Mammary epithelial cell (primary cell): ENCODE measurements at regions of chr9 and their contacts with region 1.

Region 1: DNA sequence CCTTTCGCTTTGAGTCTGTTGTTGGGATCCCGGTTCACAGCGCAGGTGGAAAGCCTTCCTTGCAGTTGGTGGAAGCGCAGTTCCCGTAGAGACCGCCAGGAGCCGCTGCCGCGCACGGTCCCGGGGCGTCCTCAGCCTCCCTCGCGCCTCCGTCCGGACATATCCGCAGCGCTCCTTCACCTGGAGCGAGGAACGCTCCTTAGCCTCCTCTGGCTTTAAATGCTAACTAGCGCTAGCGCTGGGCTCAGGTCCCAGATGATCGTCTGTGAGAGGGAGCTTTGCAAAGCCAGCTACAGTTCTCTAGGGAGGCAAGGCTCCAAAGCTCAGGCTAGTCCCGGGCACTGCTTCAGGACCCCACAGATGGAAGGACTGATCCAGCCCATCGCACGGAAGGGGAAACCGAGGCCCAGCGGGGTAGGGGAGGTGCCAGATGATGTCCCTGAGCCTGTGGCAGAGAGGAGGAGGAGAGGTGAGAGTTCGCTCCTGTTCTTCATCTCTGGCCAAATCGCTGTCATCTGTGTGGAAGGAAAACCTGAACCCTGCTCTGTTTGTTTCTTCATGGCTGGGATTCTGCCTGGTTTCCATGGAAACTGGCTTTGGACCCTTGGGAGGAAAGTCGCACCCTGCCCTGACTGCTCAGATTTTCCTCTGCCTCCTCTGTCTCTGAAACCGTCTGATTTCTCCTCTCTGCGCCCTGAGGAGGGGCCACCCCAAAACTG is 31.4 kb downstream of the COL15A1 start:
- DNase-seq: peak; percentile 66
- H3K4me3 ChIP-seq: peak overlapping the region in 1 of 3 experiments; percentile 10
- H3K27ac ChIP-seq: no peak overlapping the region
- H3K4me1 ChIP-seq: peaks cover 10% of the 10 kb centered on the region
- H3K27me3 ChIP-seq: no peaks in the 10 kb centered on the region
- CTCF ChIP-seq: peak; percentile 96 to 99

Region 2: DNA sequence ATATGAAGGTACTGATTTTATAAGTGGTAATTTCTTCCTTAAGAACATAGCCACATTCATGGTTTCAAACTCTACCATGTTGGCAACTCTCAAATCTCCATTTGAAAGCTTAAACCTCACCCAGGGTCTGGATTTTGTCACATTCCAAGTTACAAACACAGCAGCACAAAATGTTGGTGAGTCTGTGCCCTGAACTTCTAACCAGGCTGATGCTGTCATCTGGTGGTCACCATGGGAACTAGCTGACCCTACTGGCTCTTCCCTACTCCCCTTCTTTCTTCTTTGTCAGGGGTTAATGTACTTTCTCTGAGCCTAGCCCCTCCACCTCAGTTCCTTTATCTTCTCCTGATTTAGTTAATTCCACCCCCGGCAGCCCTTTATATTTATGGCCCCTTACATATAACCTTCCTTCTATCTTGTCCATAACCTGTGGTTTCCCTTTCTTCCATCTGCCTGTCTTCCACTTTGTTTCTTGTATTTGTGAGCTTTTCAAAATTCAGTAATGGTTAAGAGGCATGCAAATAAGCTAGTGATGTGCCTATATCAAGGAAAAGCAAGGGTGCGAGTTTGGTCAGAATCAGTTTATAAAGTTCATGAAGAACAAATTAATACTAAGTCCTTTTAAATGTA is 165.6 kb after region 1 on chr9:
- CTCF ChIA-PET with region 1: no interaction called
- dilution Hi-C with region 1: no loop called
- in situ Hi-C with region 1: no loop called
- intact Hi-C with region 1: loop called (anchors 1 kb)
- DNase-seq: peak; percentile 16
- H3K4me3 ChIP-seq: no peak overlapping the region
- H3K27ac ChIP-seq: no peak overlapping the region
- H3K4me1 ChIP-seq: no peaks in the 10 kb centered on the region
- H3K27me3 ChIP-seq: no peaks in the 10 kb centered on the region
- CTCF ChIP-seq: peak; percentile 92 to 95